Dendritic cell treated with granulocyte-macrophage colony-stimulating factor and Interleukin-4, amounts not matched to agents 40 ng/mL and 50 ng/mL, for 4 days (primary cell): ENCODE measurements at regions of chr11 and their contacts with region 1.

Region 1: DNA sequence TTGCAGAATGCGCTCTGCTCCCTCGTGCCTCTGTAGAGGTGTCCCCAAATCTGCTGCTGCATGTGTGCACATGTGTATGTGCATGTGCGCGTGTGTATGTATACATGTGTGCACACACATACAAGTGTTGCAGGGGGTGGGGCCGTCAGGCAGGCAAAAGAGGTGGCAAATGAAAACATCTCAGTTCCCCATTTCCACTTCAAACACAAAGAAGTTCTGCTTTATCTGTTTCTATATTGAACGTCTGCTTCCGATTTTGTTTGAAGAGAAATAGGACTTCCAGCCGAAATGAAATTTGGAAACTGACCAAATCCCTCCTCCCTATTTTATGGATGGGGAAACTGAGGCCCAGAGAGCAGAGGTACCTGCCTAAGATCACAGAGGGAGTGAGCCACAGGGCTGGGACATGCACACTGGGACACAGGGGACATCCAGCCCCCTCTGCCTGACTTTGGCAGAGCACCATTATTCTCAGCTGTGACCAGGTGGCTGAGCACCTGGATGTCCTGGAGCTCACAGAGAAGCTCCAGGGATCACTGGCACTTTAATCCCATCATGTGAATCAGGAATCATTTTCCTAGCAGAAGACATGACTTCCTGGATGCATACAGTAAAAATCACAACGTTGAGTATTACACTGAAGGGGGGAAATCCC is 41.2 kb upstream of the ALX4 start:
- H3K4me3 Mint-ChIP-seq: no peak overlapping the region
- H3K27ac Mint-ChIP-seq: no peak overlapping the region
- H3K4me1 Mint-ChIP-seq: peaks cover 23% of the 10 kb centered on the region
- H3K27me3 Mint-ChIP-seq: peaks cover 44% of the 10 kb centered on the region

Region 2: DNA sequence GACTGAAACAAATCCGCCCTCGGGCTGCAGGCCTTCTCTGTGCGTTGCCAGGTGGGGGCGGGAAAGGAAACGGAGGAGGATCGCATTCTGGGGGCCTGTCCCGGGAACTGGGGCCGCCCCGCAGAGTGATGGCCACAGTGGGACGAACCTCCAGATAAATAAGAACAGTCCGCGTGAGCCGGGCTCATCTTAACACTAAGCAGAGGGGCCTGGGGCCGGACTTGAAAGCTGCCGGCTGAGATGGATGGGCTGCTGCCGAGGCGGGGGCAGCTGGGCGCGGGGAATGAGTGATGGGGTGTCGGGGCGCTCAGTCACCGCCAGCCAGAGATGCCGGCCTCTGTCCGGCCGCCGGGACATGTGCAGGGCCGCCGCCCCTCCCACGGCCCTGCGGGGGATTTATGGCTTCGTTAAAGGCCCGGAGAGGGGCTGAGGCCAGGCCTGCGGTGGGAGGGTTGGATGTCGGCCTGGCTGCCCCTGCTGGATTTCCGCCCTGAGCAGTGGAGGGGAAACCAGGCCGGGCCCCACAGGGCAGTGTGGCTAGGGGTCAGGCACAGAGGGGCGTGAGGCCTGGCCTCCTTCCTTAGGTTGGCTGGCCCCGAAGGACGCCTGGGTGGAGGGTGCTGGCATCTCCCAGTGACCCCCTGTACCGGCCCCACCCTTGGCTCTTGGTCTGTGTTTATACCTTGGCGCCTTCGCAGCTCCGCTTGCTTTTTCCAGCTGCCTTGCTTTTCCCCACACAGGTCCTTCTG is 169.0 kb after region 1 on chr11:
- intact Hi-C with region 1: loop called (anchors 5 kb)
- H3K4me3 Mint-ChIP-seq: no peak overlapping the region
- H3K27ac Mint-ChIP-seq: no peak overlapping the region
- H3K4me1 Mint-ChIP-seq: peaks cover 11% of the 10 kb centered on the region
- H3K27me3 Mint-ChIP-seq: peaks cover 39% of the 10 kb centered on the region